Posterior vena cava (tissue), 2 donors: ENCODE measurements at regions of chr14 and their contacts with region 1.

Region 1: DNA sequence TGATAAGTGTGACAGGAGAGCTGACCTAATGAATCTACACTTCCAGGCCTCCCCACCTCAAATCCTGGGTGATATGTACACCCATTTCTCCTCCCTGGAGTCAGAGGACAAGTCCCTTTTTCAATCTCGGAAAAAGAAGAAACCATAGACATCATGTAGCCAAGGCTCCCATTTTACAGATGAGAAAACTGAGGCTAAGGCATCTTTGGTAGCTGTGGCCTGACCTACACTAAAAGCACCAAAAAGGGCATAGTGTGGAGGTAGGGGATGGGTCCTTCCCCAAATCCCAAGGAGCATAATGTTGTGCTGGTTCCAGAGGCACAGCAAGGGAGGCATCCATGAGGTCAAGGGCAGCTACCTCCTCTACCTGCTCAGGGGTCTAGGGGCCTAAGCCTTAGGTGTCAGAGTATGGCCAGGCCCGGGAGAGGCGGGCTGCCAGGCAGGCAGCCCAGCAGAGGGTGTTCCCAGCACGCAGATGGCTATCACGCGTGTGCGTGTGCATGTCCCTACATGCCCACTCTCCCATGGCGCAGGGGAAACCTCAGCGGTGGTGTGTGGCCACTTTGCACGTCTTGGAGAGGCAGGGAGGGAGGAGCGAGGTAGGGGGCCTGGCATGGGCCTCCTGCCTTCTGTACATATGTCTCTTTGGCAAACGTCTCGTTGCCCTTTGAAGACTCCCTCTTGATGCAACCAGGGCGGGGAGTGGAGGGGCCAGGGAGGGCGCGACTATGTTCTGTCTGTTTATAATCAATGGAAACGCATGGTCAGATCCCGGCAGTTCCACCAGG is 2.5 kb downstream of the PGF start:
- DNase-seq: peak; percentile 74

Region 2: GRCh38 chr14:75002392-75003249 is 49.7 kb after region 1 on chr14 and contains the start of gene EIF2B2:
- intact Hi-C with region 1: no loop called
- DNase-seq: peak; percentile 99
- total RNA-seq, gene EIF2B2: 22.3 to 29.5 TPM

Region 3: GRCh38 chr14:75081660-75082229 is 128.9 kb after region 1 on chr14:
- intact Hi-C with region 1: loop called in 1 of 2 experiments (anchors 1 kb)
- DNase-seq: no peak